ENCODE measurements at regions of chr6 and their contacts with region 1.

Region 1: DNA sequence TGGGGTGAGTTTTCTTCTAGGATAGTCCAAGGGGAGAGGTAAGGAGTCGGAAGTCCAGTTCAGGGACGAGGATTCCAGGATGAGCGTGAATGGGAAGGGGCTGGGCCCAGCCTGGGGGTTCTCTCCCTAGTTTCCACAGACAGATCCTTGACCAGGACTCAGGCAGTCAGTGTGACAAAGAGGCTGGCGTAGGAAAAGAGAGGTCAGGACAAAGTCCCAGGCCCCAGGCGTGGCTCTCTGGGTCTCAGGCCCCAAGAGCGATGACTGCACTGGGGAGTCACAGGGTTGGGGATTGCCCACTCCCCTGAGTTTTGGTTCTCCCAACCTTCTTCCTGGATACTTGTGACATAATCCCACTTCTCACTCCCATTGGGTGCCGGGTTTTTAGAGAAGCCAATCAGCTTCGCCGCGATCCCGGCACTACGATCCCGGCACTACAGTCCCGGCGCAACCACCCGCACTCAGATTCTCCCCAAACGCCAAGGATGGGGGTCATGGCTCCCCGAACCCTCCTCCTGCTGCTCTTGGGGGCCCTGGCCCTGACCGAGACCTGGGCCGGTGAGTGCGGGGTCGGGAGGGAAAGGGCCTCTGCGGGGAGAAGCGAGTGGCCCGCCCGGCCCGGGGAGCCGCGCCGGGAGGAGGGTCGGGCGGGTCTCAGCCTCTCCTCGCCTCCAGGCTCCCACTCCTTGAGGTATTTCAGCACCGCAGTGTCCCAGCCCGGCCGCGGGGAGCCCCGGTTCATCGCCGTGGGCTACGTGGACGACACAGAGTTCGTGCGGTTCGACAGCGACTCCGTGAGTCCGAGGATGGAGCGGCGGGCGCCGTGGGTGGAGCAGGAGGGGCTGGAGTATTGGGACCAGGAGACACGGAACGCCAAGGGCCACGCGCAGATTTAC is 46.2 kb upstream of the TRIM26 start:
- DNase-seq: peak; percentile 65
- H3K4me3 Mint-ChIP-seq: peak overlapping the region; percentile 87
- H3K27ac Mint-ChIP-seq: peak overlapping the region; percentile 79
- H3K4me1 Mint-ChIP-seq: peaks cover 15% of the 10 kb centered on the region
- H3K27me3 Mint-ChIP-seq: peaks cover 19% of the 10 kb centered on the region

Region 2: GRCh38 chr6:29617782-29618557 is 641.4 kb before region 1 on chr6:
- intact Hi-C with region 1: no loop called
- DNase-seq: no peak
- H3K4me3 Mint-ChIP-seq: no peak overlapping the region
- H3K27ac Mint-ChIP-seq: no peak overlapping the region
- H3K4me1 Mint-ChIP-seq: no peaks in the 10 kb centered on the region
- H3K27me3 Mint-ChIP-seq: no peaks in the 10 kb centered on the region

Region 3: GRCh38 chr6:29861521-29862255 is 397.7 kb before region 1 on chr6:
- intact Hi-C with region 1: no loop called
- DNase-seq: no peak
- H3K4me3 Mint-ChIP-seq: no peak overlapping the region
- H3K27ac Mint-ChIP-seq: no peak overlapping the region
- H3K4me1 Mint-ChIP-seq: no peaks in the 10 kb centered on the region
- H3K27me3 Mint-ChIP-seq: peaks cover 48% of the 10 kb centered on the region

Region 4: GRCh38 chr6:30219244-30219643 is 40.1 kb before region 1 on chr6:
- intact Hi-C with region 1: loop called (anchors 1 kb)
- DNase-seq: peak; percentile 43
- H3K4me3 Mint-ChIP-seq: no peak overlapping the region
- H3K27ac Mint-ChIP-seq: no peak overlapping the region
- H3K4me1 Mint-ChIP-seq: peaks cover 22% of the 10 kb centered on the region
- H3K27me3 Mint-ChIP-seq: no peaks in the 10 kb centered on the region

Region 5: GRCh38 chr6:30344868-30345671 is 85.7 kb after region 1 on chr6 and contains the start of gene RPP21:
- intact Hi-C with region 1: loop called (anchors 1 kb)
- DNase-seq: peak; percentile 84
- H3K4me3 Mint-ChIP-seq: peak within 1 kb of the TSS; percentile 91
- H3K27ac Mint-ChIP-seq: peak within 1 kb of the TSS; percentile 80
- H3K4me1 Mint-ChIP-seq: peaks cover 39% of the 10 kb centered on the region
- H3K27me3 Mint-ChIP-seq: peaks cover 5% of the 10 kb centered on the region
- total RNA-seq, gene RPP21: 54.2 and 62.8 TPM in 2 replicates

Region 6: GRCh38 chr6:30686908-30687658 is 427.7 kb after region 1 on chr6:
- intact Hi-C with region 1: no loop called
- DNase-seq: peak; percentile 83
- H3K4me3 Mint-ChIP-seq: peak overlapping the region; percentile 94
- H3K27ac Mint-ChIP-seq: peak overlapping the region; percentile 87
- H3K4me1 Mint-ChIP-seq: peaks cover 50% of the 10 kb centered on the region
- H3K27me3 Mint-ChIP-seq: no peaks in the 10 kb centered on the region